ENCODE measurements at regions of chrX and their contacts with region 1.

Region 1: GRCh38 chrX:106619797-106620196 is 8.0 kb downstream of the RADX start:
- H3K4me3 ChIP-seq: no peak overlapping the region
- H3K27ac ChIP-seq: no peak overlapping the region
- H3K4me1 ChIP-seq: peaks cover 3% of the 10 kb centered on the region
- CTCF ChIP-seq: 0 out of 2 replicates have a peak, but pooled peaks have one; percentile 37

Region 2: GRCh38 chrX:106481341-106481740 is 138.5 kb before region 1 on chrX:
- CTCF ChIA-PET with region 1: interaction called, 32 read pairs
- POLR2A ChIA-PET with region 1: no interaction called
- H3K4me3 ChIP-seq: no peak overlapping the region
- H3K27ac ChIP-seq: no peak overlapping the region
- H3K4me1 ChIP-seq: no peaks in the 10 kb centered on the region
- CTCF ChIP-seq: peak; percentile 73